Aorta (tissue), 5 donors: ENCODE measurements at regions of chr15 and their contacts with region 1.

Region 1: DNA sequence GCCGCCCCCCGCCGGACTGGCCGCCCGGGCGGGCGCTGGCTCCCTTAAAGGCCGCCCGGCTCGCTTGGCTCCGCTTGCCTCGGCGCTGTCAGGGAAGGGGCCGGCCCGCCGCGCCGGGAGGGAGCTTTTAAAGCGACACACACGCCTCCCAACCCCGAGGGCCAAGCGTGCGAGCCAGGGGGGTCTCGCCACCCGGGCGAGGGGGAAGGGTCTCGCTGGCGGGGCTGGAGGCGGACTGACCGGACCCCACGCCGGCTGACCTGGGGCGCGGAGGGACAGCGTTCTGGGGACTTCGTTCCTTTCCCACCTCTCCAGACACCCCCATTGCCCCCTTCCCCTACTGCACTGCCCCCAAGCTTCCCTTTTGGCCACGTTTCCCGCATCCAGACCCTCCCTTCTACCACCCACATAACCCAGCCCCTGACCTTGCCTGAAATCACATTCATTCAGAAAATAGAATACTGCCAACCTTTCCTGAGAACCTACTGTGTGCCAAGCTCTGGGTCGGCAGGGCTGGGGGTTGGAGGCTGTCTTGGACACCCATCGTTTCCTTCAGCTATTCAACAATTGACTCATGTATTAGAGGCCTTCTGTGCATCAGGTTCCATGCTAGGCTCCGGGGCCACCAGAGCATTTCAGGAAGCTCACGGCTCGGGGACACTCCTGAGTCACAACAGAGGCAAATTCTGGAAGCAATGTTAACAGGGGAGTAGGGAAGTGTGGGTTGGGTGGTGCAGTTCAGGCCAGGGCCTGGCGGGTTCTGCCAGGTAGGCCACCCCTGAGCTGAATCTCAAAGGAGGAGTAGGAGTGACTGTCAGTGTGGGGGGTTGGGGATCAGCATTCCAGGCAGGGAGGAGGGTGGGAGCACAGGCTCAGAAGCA is at the start of gene INSYN1:
- DNase-seq: peak in 1 of 2 donors; percentile 84
- ATAC-seq: peak; percentile 39
- H3K4me3 ChIP-seq: peak within 1 kb of the TSS; percentile 15 to 76
- H3K27ac ChIP-seq: no peak within 1 kb of the TSS
- H3K4me1 ChIP-seq: no peaks in the 10 kb centered on the region
- H3K27me3 ChIP-seq: no peaks in the 10 kb centered on the region
- total RNA-seq, gene INSYN1: 4.8 to 12.7 TPM

Region 2: GRCh38 chr15:73800662-73801345 is 47.3 kb after region 1 on chr15:
- intact Hi-C with region 1: loop called in 1 of 2 experiments (anchors 5 kb)
- DNase-seq: peak; percentile 79 to 89
- ATAC-seq: peak; percentile 71
- H3K4me3 ChIP-seq: no peak overlapping the region
- H3K27ac ChIP-seq: peak overlapping the region; percentile 71 to 94
- H3K4me1 ChIP-seq: peaks cover 0 to 10% of the 10 kb centered on the region in 2 donors
- H3K27me3 ChIP-seq: no peaks in the 10 kb centered on the region